Activated CD4-positive, alpha-beta T cell treated with anti-CD3 and anti-CD28 coated beads for 36 hours (primary cell): ENCODE measurements at regions of chr10 and their contacts with region 1.

Region 1: GRCh38 chr10:88990384-88991160 is at the start of gene FAS:
- DNase-seq: peak; percentile 91
- ATAC-seq: peak; percentile 82
- H3K4me3 Mint-ChIP-seq: peak within 1 kb of the TSS; percentile 87
- H3K27ac Mint-ChIP-seq: peak within 1 kb of the TSS; percentile 94
- H3K4me1 Mint-ChIP-seq: peaks cover 61% of the 10 kb centered on the region
- H3K27me3 Mint-ChIP-seq: no peaks in the 10 kb centered on the region
- total RNA-seq, gene FAS: 34.1 to 34.9 TPM

Region 2: DNA sequence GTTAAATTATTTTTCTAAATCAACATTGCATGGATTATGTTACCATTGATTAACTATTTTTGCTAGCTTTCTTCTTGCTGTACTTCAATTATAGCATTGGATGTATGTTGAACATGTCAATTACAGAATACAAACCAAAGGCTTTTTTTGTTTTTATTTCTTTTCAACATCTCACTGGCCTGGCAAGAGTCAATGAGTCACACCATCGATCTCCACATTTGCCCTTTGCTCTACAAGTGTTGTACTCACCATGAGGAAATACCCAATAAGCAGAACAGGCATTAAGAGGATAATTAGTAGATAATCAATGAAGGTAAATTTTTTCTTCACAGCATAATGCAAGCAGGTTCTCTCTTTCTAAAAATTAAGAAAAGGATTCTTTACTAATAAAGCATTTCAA is 162.3 kb before region 1 on chr10:
- CTCF ChIA-PET with region 1: no interaction called
- POLR2A ChIA-PET with region 1: no interaction called
- intact Hi-C with region 1: loop called (anchors 5 kb)
- DNase-seq: no peak
- ATAC-seq: no peak
- H3K4me3 Mint-ChIP-seq: no peak overlapping the region
- H3K27ac Mint-ChIP-seq: no peak overlapping the region
- H3K4me1 Mint-ChIP-seq: peaks cover 64% of the 10 kb centered on the region
- H3K27me3 Mint-ChIP-seq: no peaks in the 10 kb centered on the region

Region 3: DNA sequence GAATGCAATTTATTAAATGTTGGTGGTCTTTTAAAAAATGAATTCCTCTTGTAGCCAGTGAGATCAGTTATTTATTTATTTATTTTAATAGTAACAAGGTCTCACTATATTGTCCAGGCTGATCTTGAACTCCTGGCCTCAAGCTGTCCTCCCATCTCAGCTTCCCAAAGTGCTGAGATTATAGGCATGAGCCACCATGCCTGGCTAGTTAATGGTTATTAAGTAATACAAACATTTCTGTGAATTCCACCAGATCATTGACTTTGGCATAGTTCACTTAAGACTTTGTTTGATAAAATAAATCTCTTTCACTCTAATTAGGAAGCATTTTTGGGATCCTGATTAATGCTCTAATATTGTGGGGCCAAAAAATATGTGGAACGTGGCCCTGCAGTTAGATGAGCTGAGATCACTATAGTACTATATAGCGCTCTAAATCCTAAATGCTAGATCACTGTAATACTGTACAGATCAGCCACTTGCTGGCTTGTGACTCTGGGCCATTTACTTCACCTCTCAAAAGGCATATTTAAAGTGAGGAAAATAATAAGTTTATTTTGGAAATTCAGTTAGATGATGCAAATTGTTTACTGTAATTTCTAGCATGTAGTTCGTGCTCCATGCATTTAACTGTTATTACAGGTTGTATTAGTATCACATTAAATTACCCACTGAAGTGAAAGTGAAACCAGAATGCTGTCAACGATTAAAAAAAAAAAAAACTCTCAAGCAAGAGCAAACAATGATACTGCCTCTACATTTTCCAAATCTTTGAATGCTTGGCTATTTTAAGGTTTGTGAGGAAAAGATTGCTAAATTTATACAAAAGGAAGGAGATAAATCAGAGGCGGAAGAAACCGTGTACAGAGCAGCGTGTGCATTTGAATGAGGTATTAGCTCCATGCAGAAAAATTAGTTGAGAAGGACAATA is 15.9 kb before region 1 on chr10:
- CTCF ChIA-PET with region 1: interaction called, 9 read pairs
- POLR2A ChIA-PET with region 1: no interaction called
- intact Hi-C with region 1: loop called (anchors 1 to 2 kb)
- DNase-seq: no peak
- ATAC-seq: peak; percentile 71
- H3K4me3 Mint-ChIP-seq: peak overlapping the region; percentile 80
- H3K27ac Mint-ChIP-seq: peak overlapping the region; percentile 96
- H3K4me1 Mint-ChIP-seq: peaks cover 16% of the 10 kb centered on the region
- H3K27me3 Mint-ChIP-seq: no peaks in the 10 kb centered on the region

Region 4: DNA sequence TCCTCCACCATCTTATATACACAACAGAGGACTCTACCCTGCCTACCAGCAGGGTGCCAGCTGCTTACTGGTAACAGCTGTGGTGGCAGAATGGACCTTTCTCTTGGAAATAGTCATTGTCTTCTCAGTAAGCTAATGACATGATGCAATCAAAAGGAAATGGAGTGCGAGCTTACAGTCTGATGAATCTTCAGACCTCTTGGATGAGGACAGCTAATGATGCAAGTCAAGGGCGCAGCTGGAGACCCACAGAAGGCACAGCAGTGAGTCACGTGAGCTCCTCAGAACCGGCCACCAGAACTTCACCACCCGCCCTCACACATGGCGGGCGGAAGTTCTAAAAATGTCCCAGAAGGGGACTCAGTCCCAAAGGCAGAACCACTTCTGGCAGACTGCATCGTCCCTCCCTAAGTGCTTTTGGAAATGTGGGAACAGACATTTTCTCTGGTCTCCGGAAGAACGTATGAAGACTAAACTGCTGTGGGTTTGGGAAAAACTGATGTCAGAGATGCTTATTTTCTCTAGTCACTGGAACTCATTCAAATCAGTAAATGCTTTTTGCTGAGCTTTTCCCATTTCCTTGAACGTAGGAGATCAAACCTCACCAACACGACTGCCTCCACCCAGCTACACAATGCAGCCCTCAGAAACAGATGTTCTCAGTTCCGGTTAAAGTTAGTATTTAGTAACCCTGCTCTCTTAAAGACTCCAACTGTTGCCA is 96.4 kb after region 1 on chr10:
- CTCF ChIA-PET with region 1: no interaction called
- POLR2A ChIA-PET with region 1: interaction called, 4 read pairs
- intact Hi-C with region 1: loop called in 1 of 2 experiments (anchors 2 kb)
- DNase-seq: peak; percentile 53
- ATAC-seq: peak; percentile 55
- H3K4me3 Mint-ChIP-seq: peak overlapping the region; percentile 11
- H3K27ac Mint-ChIP-seq: peak overlapping the region; percentile 78
- H3K4me1 Mint-ChIP-seq: peaks cover 11% of the 10 kb centered on the region
- H3K27me3 Mint-ChIP-seq: peaks cover under 1% of the 10 kb centered on the region

Region 5: GRCh38 chr10:89414146-89414878 is 423.7 kb after region 1 on chr10 and contains the start of gene IFIT5:
- CTCF ChIA-PET with region 1: no interaction called
- POLR2A ChIA-PET with region 1: no interaction called
- intact Hi-C with region 1: loop called in 1 of 2 experiments (anchors 5 kb)
- DNase-seq: peak; percentile 76
- ATAC-seq: peak; percentile 74
- H3K4me3 Mint-ChIP-seq: peak within 1 kb of the TSS; percentile 81
- H3K27ac Mint-ChIP-seq: peak within 1 kb of the TSS; percentile 98
- H3K4me1 Mint-ChIP-seq: peaks cover 41% of the 10 kb centered on the region
- H3K27me3 Mint-ChIP-seq: no peaks in the 10 kb centered on the region
- total RNA-seq, gene IFIT5: 14.4 to 14.9 TPM